Prostate gland (tissue), 2 donors: ENCODE measurements at regions of chr16 and their contacts with region 1.

Region 1: GRCh38 chr16:24689145-24689544 is 40.3 kb upstream of the TNRC6A start:
- DNase-seq: no peak
- H3K4me3 ChIP-seq: no peak overlapping the region
- H3K27ac ChIP-seq: no peak overlapping the region
- H3K4me1 ChIP-seq: no peaks in the 10 kb centered on the region
- H3K27me3 ChIP-seq: no peaks in the 10 kb centered on the region
- CTCF ChIP-seq: peak in 3 of 4 experiments; percentile 17 to 29 (median 18)
- POLR2A ChIP-seq: no peak

Region 2: DNA sequence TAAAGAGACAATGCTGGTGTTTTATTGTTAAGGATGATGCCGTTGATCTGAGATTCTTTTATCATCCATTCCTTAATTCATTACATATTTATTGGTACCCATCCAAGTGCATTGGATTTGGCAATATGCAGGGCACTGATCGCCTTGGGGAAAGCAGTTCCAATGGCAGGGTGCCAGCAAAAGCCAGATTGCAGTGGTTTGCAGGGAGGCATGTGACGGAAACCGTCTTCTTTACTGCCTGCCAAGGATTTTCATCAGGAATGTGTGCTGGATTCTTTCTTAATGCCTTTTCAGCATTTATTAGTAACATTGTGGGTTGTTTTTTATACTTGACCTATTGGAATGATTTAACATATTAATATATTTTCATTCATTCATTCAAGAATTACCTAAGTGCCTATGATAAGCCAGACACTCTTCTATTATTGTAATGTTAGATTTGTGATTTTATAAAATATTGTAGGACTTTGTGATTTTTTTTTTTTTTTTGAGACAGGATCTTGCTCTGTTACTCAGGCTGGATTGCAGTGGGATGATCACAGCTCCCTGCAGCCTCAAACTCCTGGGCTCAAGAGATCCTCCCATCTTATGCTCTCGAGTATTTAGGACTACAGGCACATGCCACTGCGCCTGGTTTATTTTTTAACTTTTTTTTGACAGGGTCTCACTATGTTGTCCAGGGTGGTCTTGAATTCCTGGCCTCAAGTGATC is 53.1 kb before region 1 on chr16:
- intact Hi-C with region 1: loop called (anchors 10 kb)
- DNase-seq: peak; percentile 67
- H3K4me3 ChIP-seq: no peak overlapping the region
- H3K27ac ChIP-seq: no peak overlapping the region
- H3K4me1 ChIP-seq: no peaks in the 10 kb centered on the region
- H3K27me3 ChIP-seq: no peaks in the 10 kb centered on the region
- CTCF ChIP-seq: no peak
- POLR2A ChIP-seq: no peak